K562 (cell line): ENCODE measurements at regions of chr5 and their contacts with region 1.

Region 1: GRCh38 chr5:43120720-43121564 is at the start of gene ZNF131:
- DNase-seq: peak; percentile 96 to 100 (median 96)
- ATAC-seq: peak; percentile 93
- H3K4me3 ChIP-seq: peak within 1 kb of the TSS; percentile 88
- H3K27ac ChIP-seq: peak within 1 kb of the TSS; percentile 97
- H3K4me1 ChIP-seq: peaks cover 14 to 20% of the 10 kb centered on the region in 2 experiments
- H3K27me3 ChIP-seq: no peaks in the 10 kb centered on the region
- CTCF ChIP-seq: 0 out of 6 replicates have a peak, but pooled peaks of 1 of the 3 experiments have one; percentile 2
- EP300 ChIP-seq: peak; percentile 2; the same call in 1 of the 2 replicates
- POLR2A ChIP-seq: peak; percentile 92
- RAD21 ChIP-seq: no peak
- polyA plus RNA-seq, gene ZNF131: 28.5 to 31.7 TPM

Region 2: DNA sequence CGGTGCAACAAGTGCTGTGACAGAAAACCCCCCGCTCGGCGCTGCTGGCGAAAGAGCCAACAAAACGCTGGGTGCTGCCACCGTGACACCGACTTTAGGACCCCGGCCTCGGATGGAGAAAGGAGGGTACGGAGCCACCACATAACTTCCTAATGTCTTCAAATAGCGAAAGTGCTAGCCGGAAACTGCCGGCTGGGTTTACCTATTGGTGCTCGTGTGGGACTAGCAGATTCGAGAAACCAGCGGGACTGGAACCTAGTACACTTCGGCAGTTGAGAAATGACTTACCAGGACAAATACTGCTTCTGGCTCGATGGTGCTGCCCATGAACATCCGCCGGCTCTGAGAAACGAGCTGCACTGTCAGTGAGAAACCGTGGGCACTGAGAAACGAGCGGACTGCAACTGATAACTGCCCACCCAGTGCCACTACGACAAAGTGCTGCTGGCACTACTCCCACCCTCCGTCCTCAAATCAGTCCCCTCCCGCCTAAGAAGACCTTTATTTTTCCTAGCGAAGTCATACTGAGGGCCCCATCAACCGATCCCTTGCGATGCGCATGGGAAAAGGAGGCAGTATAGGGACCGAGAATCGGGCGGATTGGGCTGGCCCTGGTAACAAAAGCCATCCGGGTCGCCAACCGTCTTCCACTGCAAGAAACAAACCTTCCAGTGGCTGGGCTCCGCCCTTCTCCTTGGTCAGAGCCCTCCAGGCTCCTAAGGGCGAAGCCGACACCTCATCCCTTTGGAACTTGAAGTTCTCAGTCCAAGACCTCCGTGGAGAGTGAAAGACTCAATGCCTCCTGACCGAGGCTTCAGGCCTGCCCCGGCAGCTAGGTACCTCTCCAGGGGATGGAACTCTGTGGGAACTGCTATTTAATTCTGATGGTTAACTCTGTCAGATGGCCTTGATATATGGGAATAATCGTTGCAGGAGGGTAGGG is 53.9 kb before region 1 on chr5:
- CTCF ChIA-PET with region 1: no interaction called
- POLR2A ChIA-PET with region 1: interaction called, 20 read pairs
- in situ Hi-C with region 1: no loop called
- intact Hi-C with region 1: loop called (anchors 5 kb)
- DNase-seq: peak; percentile 45 to 95 (median 58)
- ATAC-seq: peak; percentile 60
- H3K4me3 ChIP-seq: peak overlapping the region; percentile 80
- H3K27ac ChIP-seq: peak overlapping the region; percentile 97
- H3K4me1 ChIP-seq: peaks cover 14 to 25% of the 10 kb centered on the region in 2 experiments
- H3K27me3 ChIP-seq: no peaks in the 10 kb centered on the region; a peak in 1 of 5 replicates
- CTCF ChIP-seq: 0 out of 6 replicates have a peak, but pooled peaks of 1 of the 3 experiments have one; percentile 2
- EP300 ChIP-seq: peak; percentile 100
- POLR2A ChIP-seq: peak; percentile 78
- RAD21 ChIP-seq: no peak

Region 3: GRCh38 chr5:43110606-43111442 is 10.1 kb before region 1 on chr5:
- CTCF ChIA-PET with region 1: no interaction called
- POLR2A ChIA-PET with region 1: interaction called, 18 read pairs
- in situ Hi-C with region 1: no loop called
- intact Hi-C with region 1: no loop called
- DNase-seq: peak; percentile 35 to 63 (median 40)
- ATAC-seq: peak; percentile 95
- H3K4me3 ChIP-seq: no peak overlapping the region
- H3K27ac ChIP-seq: no peak overlapping the region
- H3K4me1 ChIP-seq: peaks cover 0 to 2% of the 10 kb centered on the region in 2 experiments; a peak in 1 of 5 replicates
- H3K27me3 ChIP-seq: no peaks in the 10 kb centered on the region
- CTCF ChIP-seq: peak; percentile 61 to 80 (median 76)
- EP300 ChIP-seq: no peak
- POLR2A ChIP-seq: no peak
- RAD21 ChIP-seq: peak in 1 of 2 experiments; percentile 35; a peak in 2 of 4 replicates

Region 4: GRCh38 chr5:43210570-43210969 is 89.6 kb after region 1 on chr5:
- CTCF ChIA-PET with region 1: no interaction called
- POLR2A ChIA-PET with region 1: interaction called, 3 read pairs
- in situ Hi-C with region 1: no loop called
- intact Hi-C with region 1: loop called (anchors 5 kb)
- DNase-seq: no peak
- ATAC-seq: no peak
- H3K4me3 ChIP-seq: no peak overlapping the region
- H3K27ac ChIP-seq: no peak overlapping the region
- H3K4me1 ChIP-seq: peaks cover 26 to 39% of the 10 kb centered on the region in 2 experiments
- H3K27me3 ChIP-seq: no peaks in the 10 kb centered on the region
- CTCF ChIP-seq: no peak
- EP300 ChIP-seq: no peak
- POLR2A ChIP-seq: no peak
- RAD21 ChIP-seq: no peak

Region 5: DNA sequence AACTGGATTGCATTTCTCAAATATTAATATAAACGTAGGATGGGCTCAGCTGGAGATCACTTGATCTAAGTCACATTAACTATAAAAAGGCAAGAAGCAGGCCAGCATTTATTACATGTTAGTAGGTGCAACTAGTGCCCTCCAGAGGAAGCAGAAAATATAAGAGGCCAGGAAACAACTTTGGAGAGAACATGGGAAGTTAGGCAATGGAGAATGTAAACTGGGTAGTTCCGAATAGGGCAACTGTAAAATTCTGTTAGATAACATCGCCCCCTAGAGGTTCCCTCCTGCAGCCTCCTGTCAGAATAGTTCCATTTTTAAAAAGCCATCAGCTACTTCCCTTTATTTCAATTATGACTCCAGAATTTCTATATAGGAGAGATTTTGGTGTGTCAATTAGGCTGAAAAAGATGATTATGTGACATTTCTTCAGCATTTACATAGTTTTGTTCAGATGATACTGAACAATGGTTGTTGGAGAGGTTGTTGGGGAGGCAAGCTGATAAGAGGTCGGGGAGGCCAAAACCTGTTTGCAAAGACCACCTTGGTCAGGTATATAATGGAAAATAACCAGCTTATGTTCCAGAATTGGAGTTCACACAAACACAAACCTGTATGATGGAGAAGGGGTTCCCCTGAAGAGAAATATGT is 268.9 kb after region 1 on chr5:
- CTCF ChIA-PET with region 1: no interaction called
- POLR2A ChIA-PET with region 1: interaction called, 8 read pairs
- in situ Hi-C with region 1: no loop called
- intact Hi-C with region 1: loop called (anchors 5 kb)
- DNase-seq: peak; percentile 77 to 92 (median 84)
- ATAC-seq: peak; percentile 97
- H3K4me3 ChIP-seq: no peak overlapping the region
- H3K27ac ChIP-seq: no peak overlapping the region
- H3K4me1 ChIP-seq: no peaks in the 10 kb centered on the region
- H3K27me3 ChIP-seq: no peaks in the 10 kb centered on the region
- CTCF ChIP-seq: peak; percentile 88 to 99 (median 96)
- EP300 ChIP-seq: peak; percentile 48; the same call in 1 of the 2 replicates
- POLR2A ChIP-seq: no peak
- RAD21 ChIP-seq: peak; percentile 99

Region 6: DNA sequence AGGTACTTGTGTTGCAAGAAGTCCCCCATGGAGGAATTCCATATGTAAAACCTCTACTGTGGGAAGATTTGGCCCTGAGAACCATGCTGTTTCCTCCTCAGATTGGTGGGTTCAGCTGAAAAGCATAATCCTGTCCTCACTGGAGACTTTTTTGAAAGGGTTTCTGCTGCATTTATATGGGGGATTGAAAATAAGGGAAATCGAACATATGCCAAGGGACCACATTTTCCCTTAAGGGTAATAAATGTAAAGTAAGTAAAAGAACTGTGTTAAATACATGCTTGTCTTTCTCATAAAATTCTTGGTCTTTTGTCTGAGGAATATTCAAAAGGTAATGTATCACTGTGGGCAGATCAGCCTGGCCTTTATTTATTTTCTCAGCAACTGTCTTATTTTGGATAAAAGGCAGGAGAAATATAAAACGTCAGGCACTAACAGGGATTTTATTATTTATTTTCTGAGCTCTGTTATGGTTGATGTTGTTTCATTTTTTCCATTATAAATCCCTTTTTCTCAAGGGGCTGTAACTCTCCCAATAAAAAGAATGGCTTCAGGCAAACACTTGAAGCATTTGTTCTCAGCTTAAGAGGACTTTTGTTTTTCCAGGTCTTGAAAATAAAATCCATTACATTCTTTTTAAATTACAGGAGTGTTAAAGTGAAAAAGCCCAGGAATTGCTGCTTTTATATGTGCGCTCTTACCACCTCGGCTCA is 1136.9 kb after region 1 on chr5:
- CTCF ChIA-PET with region 1: no interaction called
- POLR2A ChIA-PET with region 1: no interaction called
- in situ Hi-C with region 1: no loop called
- intact Hi-C with region 1: no loop called
- DNase-seq: no peak
- ATAC-seq: no peak
- H3K4me3 ChIP-seq: no peak overlapping the region
- H3K27ac ChIP-seq: no peak overlapping the region
- H3K4me1 ChIP-seq: no peaks in the 10 kb centered on the region
- H3K27me3 ChIP-seq: no peaks in the 10 kb centered on the region
- CTCF ChIP-seq: no peak
- EP300 ChIP-seq: no peak
- POLR2A ChIP-seq: no peak
- RAD21 ChIP-seq: no peak